AG04450 (cell line): ENCODE measurements at regions of chr11 and their contacts with region 1.

Region 1: GRCh38 chr11:83836883-83837654 is 550.9 kb upstream of the CCDC90B start:
- DNase-seq: no peak
- H3K4me3 ChIP-seq: no peak overlapping the region
- H3K27ac ChIP-seq: no peak overlapping the region
- H3K27me3 ChIP-seq: no peaks in the 10 kb centered on the region
- CTCF ChIP-seq: peak; percentile 88

Region 2: DNA sequence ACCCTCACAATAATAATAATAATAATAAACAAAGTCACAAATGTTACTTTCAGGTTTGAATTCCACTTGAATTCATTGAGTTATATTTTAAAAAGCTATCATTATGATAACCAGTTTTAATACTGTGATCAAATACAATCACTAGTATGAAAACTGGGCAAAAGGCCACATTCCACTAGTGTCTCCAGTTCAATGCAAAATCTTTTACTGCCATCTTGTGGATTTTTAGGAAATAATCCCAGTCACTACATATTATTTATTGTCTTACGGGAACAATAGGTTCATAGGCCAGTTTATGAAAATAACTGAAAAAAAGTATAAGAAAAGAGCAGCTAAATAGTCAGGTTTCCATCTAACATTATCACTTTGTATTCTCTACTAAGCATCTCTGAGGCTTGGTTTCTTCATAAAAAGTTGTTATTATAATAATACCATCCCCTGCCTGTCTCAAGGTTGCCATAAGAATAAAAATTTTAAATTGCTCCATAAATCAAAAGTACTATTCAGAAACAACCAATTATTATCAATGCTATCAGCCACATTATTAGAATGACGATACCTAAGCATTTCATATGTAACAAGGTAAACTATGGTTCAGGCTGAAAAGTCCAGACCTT is 17.0 kb before region 1 on chr11:
- CTCF ChIA-PET with region 1: interaction called, 25 read pairs
- POLR2A ChIA-PET with region 1: no interaction called
- DNase-seq: peak; percentile 52
- H3K4me3 ChIP-seq: no peak overlapping the region
- H3K27ac ChIP-seq: no peak overlapping the region
- H3K27me3 ChIP-seq: no peaks in the 10 kb centered on the region
- CTCF ChIP-seq: peak; percentile 58

Region 3: DNA sequence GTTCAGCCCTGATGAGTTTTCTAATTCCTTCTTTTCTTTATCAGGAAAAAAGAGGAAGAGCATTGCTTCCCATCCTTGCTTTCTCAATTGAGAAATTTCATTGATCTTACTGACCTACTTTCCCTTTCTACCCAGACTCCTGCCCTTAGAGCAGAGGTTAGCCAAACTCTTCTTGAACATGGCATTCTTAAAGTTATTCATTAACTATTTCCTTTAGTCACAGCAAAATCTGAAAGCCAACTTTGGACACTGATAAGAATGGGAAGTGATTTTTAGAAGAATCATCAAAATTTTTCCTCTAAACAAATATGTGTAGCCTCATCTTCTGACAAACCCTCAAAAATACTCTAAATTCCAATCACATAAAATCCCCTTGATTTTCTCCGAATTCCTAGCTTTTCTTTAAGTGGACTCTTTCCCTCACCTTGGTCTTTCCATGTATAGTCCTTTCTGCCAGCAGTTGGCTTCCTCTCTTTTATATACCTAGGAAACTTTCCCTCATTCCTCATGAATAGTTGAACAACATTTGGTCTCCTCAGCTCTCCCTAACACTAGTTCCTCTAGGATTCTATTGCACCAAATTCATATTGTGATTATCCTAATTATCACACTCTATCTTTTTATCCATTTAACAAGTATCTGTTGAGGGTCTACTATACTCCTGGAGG is 15.8 kb after region 1 on chr11:
- CTCF ChIA-PET with region 1: interaction called, 18 read pairs
- POLR2A ChIA-PET with region 1: no interaction called
- DNase-seq: no peak
- H3K4me3 ChIP-seq: no peak overlapping the region
- H3K27ac ChIP-seq: no peak overlapping the region
- H3K27me3 ChIP-seq: no peaks in the 10 kb centered on the region
- CTCF ChIP-seq: no peak

Region 4: GRCh38 chr11:83865636-83866461 is 28.8 kb after region 1 on chr11:
- CTCF ChIA-PET with region 1: no interaction called
- POLR2A ChIA-PET with region 1: no interaction called
- DNase-seq: no peak
- H3K4me3 ChIP-seq: no peak overlapping the region
- H3K27ac ChIP-seq: no peak overlapping the region
- H3K27me3 ChIP-seq: no peaks in the 10 kb centered on the region
- CTCF ChIP-seq: no peak

Region 5: GRCh38 chr11:84524422-84525051 is 687.5 kb after region 1 on chr11:
- CTCF ChIA-PET with region 1: interaction called, 87 read pairs
- POLR2A ChIA-PET with region 1: no interaction called
- DNase-seq: no peak
- H3K4me3 ChIP-seq: no peak overlapping the region
- H3K27ac ChIP-seq: no peak overlapping the region
- H3K27me3 ChIP-seq: no peaks in the 10 kb centered on the region
- CTCF ChIP-seq: peak; percentile 62

Region 6: DNA sequence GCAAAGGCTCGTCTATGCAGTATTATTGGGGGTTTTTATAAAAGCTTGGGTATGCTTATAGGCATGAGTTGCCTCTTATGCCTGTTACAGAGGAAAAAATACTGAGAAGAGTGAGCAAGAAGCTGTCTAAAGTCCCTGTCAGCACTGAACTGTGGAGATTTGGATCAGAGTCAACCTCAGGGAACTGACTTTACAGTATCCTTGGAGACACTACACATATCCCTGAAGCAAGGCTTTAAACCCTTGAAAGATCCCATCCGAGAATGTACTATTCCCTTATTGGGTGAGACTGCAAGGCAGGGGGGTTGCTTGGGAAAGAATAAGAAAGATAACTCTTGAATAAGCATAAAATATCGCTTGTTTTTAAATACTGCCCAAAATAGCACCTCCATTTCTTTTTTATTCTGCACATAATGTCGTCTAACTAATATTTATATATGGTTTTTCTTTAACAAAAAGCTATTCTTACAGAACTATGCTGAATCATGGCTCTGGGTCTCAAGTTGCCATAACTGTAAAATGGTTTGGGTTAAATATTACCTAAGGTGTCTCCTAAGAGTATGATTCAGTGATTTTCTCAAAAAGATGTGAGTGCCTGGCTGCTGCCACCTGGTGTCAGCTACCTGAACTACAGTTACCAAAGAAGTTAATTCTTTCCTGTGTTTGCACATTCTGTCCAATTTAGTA is 727.3 kb after region 1 on chr11:
- CTCF ChIA-PET with region 1: interaction called, 23 read pairs
- POLR2A ChIA-PET with region 1: no interaction called
- DNase-seq: peak; percentile 6
- H3K4me3 ChIP-seq: no peak overlapping the region
- H3K27ac ChIP-seq: no peak overlapping the region
- H3K27me3 ChIP-seq: no peaks in the 10 kb centered on the region
- CTCF ChIP-seq: peak; percentile 87